Calu3 (cell line): ENCODE measurements at regions of chr2 and their contacts with region 1.

Region 1: DNA sequence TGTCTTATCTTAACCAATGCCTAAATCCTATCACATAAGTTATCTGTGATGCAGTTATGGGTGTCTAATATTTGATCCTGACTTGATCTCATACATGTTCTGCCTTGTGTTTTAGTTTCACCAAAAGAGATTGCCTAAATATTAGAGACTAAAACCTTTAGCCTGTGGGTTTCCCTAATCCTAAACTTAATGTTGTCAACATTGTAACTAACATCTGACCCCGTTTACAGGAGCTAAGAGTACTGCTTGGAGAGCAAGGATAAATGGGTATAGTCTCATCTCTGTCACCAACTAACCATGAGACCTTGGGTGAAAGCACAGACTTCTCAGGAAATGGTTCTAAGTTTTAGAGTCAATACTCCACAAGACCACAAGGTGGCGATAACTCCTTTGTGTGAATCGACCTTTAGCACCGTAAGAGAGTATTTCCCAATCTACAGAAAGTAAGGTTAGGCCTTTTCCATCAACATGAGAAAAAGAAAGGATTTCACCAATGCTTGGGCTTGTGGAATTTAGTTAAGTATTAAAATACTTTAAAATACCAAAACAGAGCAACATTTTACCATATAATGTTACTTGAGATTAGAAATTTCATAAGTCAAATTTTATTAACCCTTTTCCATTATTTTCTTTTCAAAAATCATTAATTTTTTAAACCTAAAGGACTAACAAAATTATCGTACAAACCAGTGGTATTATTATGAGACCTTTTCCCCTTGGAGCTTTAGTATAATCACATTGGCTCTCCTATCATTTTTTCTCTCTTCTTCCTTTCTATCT is 60.5 kb downstream of the G6PC2 start:
- DNase-seq: peak; percentile 77
- H3K4me3 Mint-ChIP-seq: no peak overlapping the region
- H3K27ac Mint-ChIP-seq: peak overlapping the region; percentile 71
- H3K4me1 Mint-ChIP-seq: peaks cover 40% of the 10 kb centered on the region
- H3K27me3 Mint-ChIP-seq: no peaks in the 10 kb centered on the region
- CTCF ChIP-seq: peak; percentile 96

Region 2: DNA sequence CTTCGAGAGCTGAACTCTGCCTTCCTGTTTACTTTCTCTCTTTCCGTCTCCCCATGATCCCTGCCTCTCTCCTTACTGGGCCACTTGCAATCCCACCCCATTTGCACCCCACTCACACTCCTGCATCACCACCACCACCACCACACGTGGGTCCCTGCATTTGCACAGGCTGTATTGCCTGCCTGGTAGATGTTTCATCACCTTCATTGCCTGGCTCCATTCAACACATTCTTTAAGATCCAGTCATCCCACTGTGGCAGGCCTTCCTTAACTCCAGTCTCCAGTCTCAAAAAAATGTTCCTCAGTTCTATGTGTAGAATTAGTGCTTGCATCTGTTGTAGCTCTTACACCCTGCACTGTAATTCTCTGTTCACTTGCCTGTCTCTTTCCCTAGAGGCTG is 145.3 kb before region 1 on chr2:
- CTCF ChIA-PET with region 1: no interaction called
- intact Hi-C with region 1: loop called (anchors 5 kb)
- DNase-seq: peak; percentile 65
- H3K4me3 Mint-ChIP-seq: peak overlapping the region; percentile 14
- H3K27ac Mint-ChIP-seq: peak overlapping the region; percentile 78
- H3K4me1 Mint-ChIP-seq: peaks cover 57% of the 10 kb centered on the region
- H3K27me3 Mint-ChIP-seq: no peaks in the 10 kb centered on the region
- CTCF ChIP-seq: no peak

Region 3: DNA sequence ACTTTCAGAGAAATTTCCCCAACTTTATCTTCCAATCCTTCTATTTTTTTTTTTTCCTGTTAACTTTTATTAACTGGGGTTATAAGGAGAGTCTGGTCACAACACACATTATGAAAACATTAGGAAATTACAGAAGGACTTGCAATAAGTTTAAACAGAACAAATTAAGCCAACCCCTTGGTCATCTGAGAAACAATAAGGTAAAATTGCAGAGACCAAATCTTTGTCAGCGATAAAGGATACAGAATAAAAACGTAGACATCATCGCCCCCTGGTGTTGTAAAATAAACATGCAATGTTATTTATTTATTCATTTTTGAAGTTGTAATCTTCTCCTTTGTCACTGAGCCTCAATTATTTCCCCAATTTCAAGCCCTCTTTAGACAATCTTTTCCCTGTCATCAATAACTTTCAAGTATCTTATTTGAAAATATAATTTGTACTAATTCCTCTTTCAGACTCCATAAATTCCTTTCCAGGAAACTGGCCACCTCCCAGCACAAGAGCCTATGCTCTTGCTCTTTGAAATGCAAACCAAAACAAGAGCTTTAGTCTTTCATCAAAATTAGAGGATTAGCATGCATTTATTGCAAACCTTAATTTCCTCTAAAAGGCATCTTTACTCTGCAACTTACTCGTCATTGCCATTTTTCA is 41.0 kb before region 1 on chr2:
- CTCF ChIA-PET with region 1: no interaction called
- intact Hi-C with region 1: loop called (anchors 1 kb)
- DNase-seq: peak; percentile 44
- H3K4me3 Mint-ChIP-seq: no peak overlapping the region
- H3K27ac Mint-ChIP-seq: no peak overlapping the region
- H3K4me1 Mint-ChIP-seq: peaks cover 14% of the 10 kb centered on the region
- H3K27me3 Mint-ChIP-seq: no peaks in the 10 kb centered on the region
- CTCF ChIP-seq: peak; percentile 68

Region 4: GRCh38 chr2:169001116-169001815 is 39.6 kb after region 1 on chr2:
- CTCF ChIA-PET with region 1: no interaction called
- intact Hi-C with region 1: no loop called
- DNase-seq: no peak
- H3K4me3 Mint-ChIP-seq: no peak overlapping the region
- H3K27ac Mint-ChIP-seq: no peak overlapping the region
- H3K4me1 Mint-ChIP-seq: peaks cover 58% of the 10 kb centered on the region
- H3K27me3 Mint-ChIP-seq: no peaks in the 10 kb centered on the region
- CTCF ChIP-seq: no peak

Region 5: GRCh38 chr2:169038338-169038757 is 76.7 kb after region 1 on chr2:
- CTCF ChIA-PET with region 1: interaction called, 4 read pairs
- intact Hi-C with region 1: loop called (anchors 2 kb)
- DNase-seq: peak; percentile 54
- H3K4me3 Mint-ChIP-seq: no peak overlapping the region
- H3K27ac Mint-ChIP-seq: peak overlapping the region; percentile 87
- H3K4me1 Mint-ChIP-seq: peaks cover 63% of the 10 kb centered on the region
- H3K27me3 Mint-ChIP-seq: no peaks in the 10 kb centered on the region
- CTCF ChIP-seq: no peak

Region 6: DNA sequence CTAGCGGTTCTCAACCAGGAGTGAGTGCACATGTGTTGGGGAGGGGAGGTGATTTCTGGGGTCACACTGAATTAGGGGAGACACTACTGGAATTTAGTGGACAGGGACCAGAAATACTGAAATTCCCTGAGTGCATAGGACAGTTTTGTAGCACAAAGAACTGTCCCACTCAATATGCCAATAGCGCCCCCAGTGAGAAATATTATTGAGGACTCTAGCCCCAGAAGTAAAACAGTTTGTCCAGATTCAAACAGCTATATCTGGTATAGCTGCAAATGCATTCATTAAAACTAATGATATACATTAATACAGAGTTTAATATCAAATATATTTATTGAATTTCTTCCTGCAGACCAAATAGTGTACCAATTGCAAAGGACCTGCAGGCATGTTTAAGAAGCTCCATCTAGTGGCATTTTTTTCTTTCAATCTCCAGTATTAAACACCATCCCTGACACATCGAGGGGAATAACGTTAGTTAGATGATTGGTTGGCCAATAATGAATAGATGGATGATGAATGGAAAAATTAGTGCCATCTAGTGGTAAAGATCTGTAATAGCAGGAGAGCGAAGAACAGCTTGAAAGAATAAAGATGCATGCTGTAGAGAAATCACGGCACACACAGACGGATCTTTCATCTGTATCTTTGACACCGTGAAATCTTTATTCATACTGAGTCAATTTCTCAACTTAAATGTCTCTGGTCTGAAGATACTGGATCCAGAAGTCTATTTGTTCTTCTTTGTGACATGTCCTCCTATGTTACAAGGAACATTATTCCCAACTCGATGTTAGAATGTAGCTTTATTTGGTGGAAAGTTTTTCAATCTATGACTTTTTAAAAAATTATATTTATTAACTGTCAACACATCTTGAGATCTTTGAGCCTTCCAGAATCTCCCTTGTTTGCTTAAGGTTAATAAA is 170.2 kb after region 1 on chr2:
- CTCF ChIA-PET with region 1: interaction called, 8 read pairs
- intact Hi-C with region 1: loop called (anchors 1 kb)
- DNase-seq: peak; percentile 34
- H3K4me3 Mint-ChIP-seq: no peak overlapping the region
- H3K27ac Mint-ChIP-seq: no peak overlapping the region
- H3K4me1 Mint-ChIP-seq: no peaks in the 10 kb centered on the region
- H3K27me3 Mint-ChIP-seq: no peaks in the 10 kb centered on the region
- CTCF ChIP-seq: peak; percentile 74